AG04450 (cell line): ENCODE measurements at regions of chr17 and their contacts with region 1.

Region 1: GRCh38 chr17:1829592-1830257 is at the starts of genes RPA1 and SMYD4:
- DNase-seq: peak; percentile 33
- H3K4me3 ChIP-seq: peak within 1 kb of the TSS; percentile 63
- H3K27ac ChIP-seq: no peak within 1 kb of the TSS
- H3K27me3 ChIP-seq: no peaks in the 10 kb centered on the region
- CTCF ChIP-seq: no peak
- polyA plus RNA-seq, gene RPA1: 52.3 and 56.4 TPM in 2 replicates
- polyA plus RNA-seq, gene SMYD4: 5.6 and 5.7 TPM in 2 replicates

Region 2: DNA sequence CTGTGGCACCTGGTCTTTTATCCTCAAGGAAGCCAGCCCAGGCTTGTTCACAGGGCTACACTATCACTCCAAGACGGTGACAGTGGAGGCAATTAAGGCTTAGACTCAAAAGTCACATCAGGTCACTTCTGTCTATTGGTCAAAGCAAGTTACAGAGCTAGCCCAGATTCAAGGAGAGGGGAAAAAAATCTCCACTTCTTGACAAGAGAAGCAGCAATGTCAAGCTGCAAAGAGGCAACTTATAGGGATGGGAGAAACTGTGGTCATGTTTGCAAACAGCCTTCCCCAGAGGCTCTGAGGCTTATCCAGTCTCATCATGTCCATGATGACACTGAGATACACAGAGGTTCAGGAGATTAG is 36.3 kb before region 1 on chr17:
- CTCF ChIA-PET with region 1: interaction called, 11 read pairs
- POLR2A ChIA-PET with region 1: no interaction called
- DNase-seq: no peak
- H3K4me3 ChIP-seq: no peak overlapping the region
- H3K27ac ChIP-seq: peak overlapping the region; percentile 3
- H3K27me3 ChIP-seq: no peaks in the 10 kb centered on the region
- CTCF ChIP-seq: no peak

Region 3: DNA sequence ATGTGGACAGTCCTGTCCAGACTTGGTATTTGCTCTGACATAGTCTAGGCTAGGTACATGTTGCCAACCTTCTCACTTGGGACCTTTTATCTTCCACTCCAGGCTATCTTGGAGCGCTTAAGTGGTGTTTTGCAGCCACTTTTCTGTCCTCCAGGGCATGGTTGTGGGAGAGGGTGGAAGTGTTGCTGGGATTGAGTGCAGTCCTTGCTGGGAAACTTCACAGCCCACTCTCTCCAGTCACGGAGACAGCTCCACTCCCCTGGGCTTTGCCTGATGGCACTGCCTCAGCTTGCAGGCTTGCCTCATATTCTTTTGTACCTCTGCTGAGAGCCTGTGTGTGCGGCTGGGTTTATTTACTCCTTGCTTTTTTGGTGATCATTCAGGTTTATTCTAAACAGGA is 17.5 kb after region 1 on chr17:
- CTCF ChIA-PET with region 1: no interaction called
- POLR2A ChIA-PET with region 1: no interaction called
- DNase-seq: no peak
- H3K4me3 ChIP-seq: no peak overlapping the region
- H3K27ac ChIP-seq: no peak overlapping the region
- H3K27me3 ChIP-seq: no peaks in the 10 kb centered on the region
- CTCF ChIP-seq: no peak